ENCODE measurements at regions of chr11 and their contacts with region 1.

Region 1: DNA sequence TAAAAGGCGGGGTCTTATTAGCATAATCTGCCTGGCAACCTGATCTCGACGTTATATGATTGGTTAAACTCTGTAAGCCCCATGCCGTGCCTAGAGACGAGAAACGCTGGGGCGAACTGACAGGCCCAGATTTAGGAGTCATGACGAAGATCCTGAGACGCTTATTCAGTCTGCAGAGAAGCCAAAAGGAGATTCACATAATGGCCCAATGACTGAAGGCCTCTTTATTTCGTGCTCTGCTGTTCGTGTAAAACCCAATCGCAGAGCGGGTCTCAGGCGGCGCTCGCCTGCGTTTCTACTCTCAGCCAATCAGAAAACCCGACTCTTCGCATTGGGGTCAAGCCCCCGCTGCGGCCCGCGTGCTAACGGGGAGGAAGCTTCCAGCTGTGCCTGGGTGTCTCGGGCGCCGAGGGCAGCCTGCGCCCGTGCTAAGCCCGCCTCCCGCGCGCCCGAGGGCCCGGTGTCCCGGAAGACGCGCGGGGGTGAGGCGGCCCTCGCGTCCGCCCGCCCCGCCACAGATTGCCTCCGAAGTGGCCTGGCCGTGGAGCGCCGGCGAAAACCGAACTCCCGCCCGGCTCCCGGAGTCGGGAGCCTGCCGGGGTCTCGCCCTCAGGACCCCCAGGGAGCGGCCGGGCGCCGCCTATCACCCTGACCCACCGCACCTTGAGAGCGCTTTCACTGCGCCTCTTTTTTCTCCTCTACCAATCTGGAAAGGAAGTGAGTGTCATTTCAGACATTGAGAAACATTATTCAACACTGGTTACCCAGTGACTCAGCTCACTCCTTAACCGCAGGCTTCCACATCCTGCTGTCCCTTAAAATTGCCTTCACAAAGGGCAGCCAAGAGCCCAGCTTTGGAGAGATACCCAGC is 446 bp upstream of the PRDM10 start:
- DNase-seq: peak; percentile 91 to 98
- ATAC-seq: peak; percentile 86 to 89 (median 88)
- H3K4me3 ChIP-seq: peak overlapping the region; percentile 84
- H3K27ac ChIP-seq: peak overlapping the region; percentile 100
- H3K4me1 ChIP-seq: peaks cover 22% of the 10 kb centered on the region
- H3K27me3 ChIP-seq: no peaks in the 10 kb centered on the region
- CTCF ChIP-seq: no peak

Region 2: GRCh38 chr11:129163714-129164164 is 839.3 kb before region 1 on chr11:
- intact Hi-C with region 1: no loop called
- DNase-seq: no peak
- ATAC-seq: no peak
- H3K4me3 ChIP-seq: no peak overlapping the region
- H3K27ac ChIP-seq: no peak overlapping the region
- H3K4me1 ChIP-seq: no peaks in the 10 kb centered on the region
- H3K27me3 ChIP-seq: no peaks in the 10 kb centered on the region
- CTCF ChIP-seq: no peak

Region 3: DNA sequence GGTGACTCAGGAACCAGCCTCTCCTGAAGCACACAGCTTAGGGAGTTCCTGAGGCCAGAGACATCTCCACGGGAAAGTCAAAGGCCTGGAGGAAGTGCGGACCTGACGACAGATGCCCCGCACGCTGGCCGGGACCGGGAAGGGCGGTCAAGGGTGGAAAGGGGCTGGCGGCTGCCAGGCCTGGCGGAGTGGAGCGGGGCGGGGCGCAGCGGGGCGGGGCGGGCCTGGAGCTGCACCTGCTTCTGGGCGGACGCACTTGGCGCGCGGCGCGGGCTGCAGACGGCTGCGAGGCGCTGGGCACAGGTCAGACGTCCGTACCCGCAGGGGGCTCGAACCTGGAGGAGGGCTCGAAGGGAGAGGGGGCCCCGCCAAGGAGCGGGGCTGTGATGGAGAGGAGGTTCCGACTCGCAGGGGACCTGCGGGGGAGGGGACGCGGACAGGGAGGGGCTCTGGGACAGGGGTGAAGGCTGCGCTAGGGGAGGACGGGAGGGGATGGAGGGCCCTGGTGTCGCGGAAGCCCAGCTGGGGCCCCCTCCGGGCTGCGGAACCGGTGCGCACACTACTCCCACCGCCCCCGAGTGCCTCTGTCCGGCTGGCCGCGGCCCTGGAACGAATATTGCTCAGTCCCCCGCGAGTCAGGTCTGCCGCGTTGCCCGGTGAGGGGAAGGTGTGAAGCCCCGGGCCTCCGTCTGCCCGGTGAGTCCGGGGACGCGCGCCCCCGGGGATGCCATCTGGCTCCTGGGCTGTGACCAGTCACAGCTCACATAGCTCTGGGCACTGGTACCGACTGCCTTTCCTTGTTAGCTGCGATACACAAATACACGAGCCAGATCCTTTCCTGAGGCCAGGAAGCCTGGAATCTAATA is 187.3 kb before region 1 on chr11 and contains the start of gene TMEM45B:
- intact Hi-C with region 1: no loop called
- DNase-seq: no peak
- ATAC-seq: no peak
- H3K4me3 ChIP-seq: no peak within 1 kb of the TSS
- H3K27ac ChIP-seq: no peak within 1 kb of the TSS
- H3K4me1 ChIP-seq: no peaks in the 10 kb centered on the region
- H3K27me3 ChIP-seq: peaks cover 0 to 20% (median 14%) of the 10 kb centered on the region in 3 donors
- CTCF ChIP-seq: no peak
- total RNA-seq, gene TMEM45B: not detected

Region 4: GRCh38 chr11:129960216-129961214 is 42.6 kb before region 1 on chr11:
- intact Hi-C with region 1: no loop called
- DNase-seq: no peak
- ATAC-seq: no peak
- H3K4me3 ChIP-seq: no peak overlapping the region
- H3K27ac ChIP-seq: no peak overlapping the region
- H3K4me1 ChIP-seq: no peaks in the 10 kb centered on the region
- H3K27me3 ChIP-seq: no peaks in the 10 kb centered on the region
- CTCF ChIP-seq: no peak

Region 5: GRCh38 chr11:130069684-130070108 is 66.6 kb after region 1 on chr11 and contains the start of gene APLP2:
- intact Hi-C with region 1: loop called (anchors 1 to 5 kb)
- DNase-seq: peak; percentile 99 to 100
- ATAC-seq: peak; percentile 92 to 96 (median 94)
- H3K4me3 ChIP-seq: peak within 1 kb of the TSS; percentile 93
- H3K27ac ChIP-seq: peak within 1 kb of the TSS; percentile 95
- H3K4me1 ChIP-seq: peaks cover 23% of the 10 kb centered on the region
- H3K27me3 ChIP-seq: no peaks in the 10 kb centered on the region
- CTCF ChIP-seq: no peak
- total RNA-seq, gene APLP2: 59.4 to 85.9 (median 65.3) TPM